A673 (cell line): ENCODE measurements at regions of chr1 and their contacts with region 1.

Region 1: DNA sequence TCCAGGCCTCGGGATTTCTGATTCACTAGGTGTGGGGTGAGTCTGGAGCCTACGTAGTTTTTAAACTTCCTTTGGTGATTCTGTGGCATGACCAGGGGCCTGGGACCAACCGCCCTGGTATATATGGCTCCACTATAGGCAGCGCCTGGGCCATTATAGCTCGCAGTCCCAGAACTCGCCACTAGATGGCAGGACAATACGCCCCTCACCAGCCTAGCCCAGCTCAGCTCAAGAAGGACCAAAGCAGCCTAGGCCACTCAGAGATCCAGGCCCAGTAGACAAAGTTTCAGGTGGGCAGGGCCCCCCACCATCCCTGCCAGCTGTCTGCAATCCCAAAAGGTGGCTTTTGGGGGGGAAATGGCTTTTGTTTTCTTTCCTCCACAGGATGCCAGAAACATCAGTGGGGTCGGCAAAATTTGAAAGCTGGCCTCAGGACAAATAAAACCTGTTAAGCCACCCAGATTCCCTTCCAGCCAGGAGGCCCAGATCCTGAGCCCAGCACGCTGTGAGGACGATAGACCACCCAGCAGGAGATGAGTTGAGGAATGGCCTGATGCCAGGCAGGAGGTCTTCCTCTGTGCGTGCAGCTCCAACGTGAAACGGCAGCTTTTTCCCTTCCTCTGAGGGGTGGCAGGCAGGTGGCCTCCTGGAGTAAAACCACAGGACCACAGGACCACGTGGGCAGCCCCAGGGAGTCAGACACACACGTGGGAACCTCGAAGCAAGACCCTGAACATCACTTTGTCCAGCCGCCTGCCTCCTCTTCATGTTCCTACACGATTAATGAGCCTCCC is 24.8 kb upstream of the TMEM51 start:
- DNase-seq: peak; percentile 81
- H3K4me3 ChIP-seq: no peak overlapping the region
- H3K27ac ChIP-seq: no peak overlapping the region
- H3K4me1 ChIP-seq: no peaks in the 10 kb centered on the region
- H3K27me3 ChIP-seq: no peaks in the 10 kb centered on the region
- CTCF ChIP-seq: peak; percentile 91

Region 2: GRCh38 chr1:15189692-15190370 is 61.1 kb after region 1 on chr1:
- CTCF ChIA-PET with region 1: no interaction called
- POLR2A ChIA-PET with region 1: no interaction called
- intact Hi-C with region 1: no loop called
- DNase-seq: no peak
- H3K4me3 ChIP-seq: no peak overlapping the region
- H3K27ac ChIP-seq: no peak overlapping the region
- H3K4me1 ChIP-seq: no peaks in the 10 kb centered on the region
- H3K27me3 ChIP-seq: no peaks in the 10 kb centered on the region
- CTCF ChIP-seq: no peak

Region 3: GRCh38 chr1:15272009-15272788 is 143.5 kb after region 1 on chr1:
- CTCF ChIA-PET with region 1: interaction called, 15 read pairs
- POLR2A ChIA-PET with region 1: no interaction called
- intact Hi-C with region 1: loop called (anchors 1 kb)
- DNase-seq: peak; percentile 85
- H3K4me3 ChIP-seq: no peak overlapping the region
- H3K27ac ChIP-seq: no peak overlapping the region
- H3K4me1 ChIP-seq: peaks cover 6% of the 10 kb centered on the region
- H3K27me3 ChIP-seq: no peaks in the 10 kb centered on the region
- CTCF ChIP-seq: peak; percentile 83

Region 4: DNA sequence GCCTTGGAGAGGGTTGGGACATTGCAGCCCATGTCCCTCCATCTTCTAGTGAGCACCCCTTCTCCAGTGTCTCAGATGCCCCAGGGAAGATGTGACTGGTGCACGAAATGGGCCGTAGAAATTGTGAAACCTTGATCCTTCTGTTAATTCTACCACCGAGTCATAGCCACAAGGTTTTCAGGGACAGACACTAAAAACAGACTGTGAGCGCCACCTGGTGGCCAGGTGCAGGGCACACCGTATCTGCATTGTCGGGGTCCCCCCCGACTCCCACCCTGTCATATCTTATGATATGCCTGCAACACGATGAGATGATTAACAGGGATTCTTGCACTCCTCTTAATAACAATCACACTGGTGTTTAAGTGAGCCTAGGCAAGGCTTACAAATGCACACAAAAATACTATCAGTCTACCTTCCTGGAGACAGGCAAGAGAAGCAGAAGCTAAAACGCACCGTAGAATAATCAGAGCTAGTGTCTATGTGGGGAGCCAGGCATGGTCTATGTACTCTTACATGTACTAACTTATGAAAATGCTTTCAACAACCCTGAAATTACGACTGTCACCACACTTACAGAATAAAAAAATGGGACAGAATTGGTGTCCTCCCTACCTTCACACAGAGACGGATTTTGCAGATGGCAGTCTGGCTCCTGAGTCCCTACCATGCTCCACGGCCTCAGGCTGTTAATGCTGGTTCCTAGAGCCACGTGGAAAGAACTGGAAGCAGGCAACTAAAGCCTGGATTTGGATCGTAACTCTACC is 176.2 kb after region 1 on chr1:
- CTCF ChIA-PET with region 1: interaction called, 11 read pairs
- POLR2A ChIA-PET with region 1: no interaction called
- intact Hi-C with region 1: loop called (anchors 1 kb)
- DNase-seq: peak; percentile 47
- H3K4me3 ChIP-seq: no peak overlapping the region
- H3K27ac ChIP-seq: no peak overlapping the region
- H3K4me1 ChIP-seq: no peaks in the 10 kb centered on the region
- H3K27me3 ChIP-seq: no peaks in the 10 kb centered on the region
- CTCF ChIP-seq: peak; percentile 93

Region 5: GRCh38 chr1:15430787-15431570 is 302.3 kb after region 1 on chr1:
- CTCF ChIA-PET with region 1: interaction called, 4 read pairs
- POLR2A ChIA-PET with region 1: no interaction called
- intact Hi-C with region 1: loop called (anchors 5 kb)
- DNase-seq: peak; percentile 60
- H3K4me3 ChIP-seq: no peak overlapping the region
- H3K27ac ChIP-seq: no peak overlapping the region
- H3K4me1 ChIP-seq: no peaks in the 10 kb centered on the region
- H3K27me3 ChIP-seq: no peaks in the 10 kb centered on the region
- CTCF ChIP-seq: peak; percentile 95